Astrocyte of the cerebellum (primary cell): ENCODE measurements at regions of chr3 and their contacts with region 1.

Region 1: GRCh38 chr3:177694316-177694715 is 497.0 kb upstream of the TBL1XR1 start:
- DNase-seq: peak; percentile 49
- H3K4me3 ChIP-seq: no peak overlapping the region
- CTCF ChIP-seq: no peak

Region 2: GRCh38 chr3:177633671-177634207 is 60.6 kb before region 1 on chr3:
- in situ Hi-C with region 1: loop called (anchors 5 kb)
- DNase-seq: peak; percentile 89
- H3K4me3 ChIP-seq: no peak overlapping the region
- CTCF ChIP-seq: no peak